HEK293 (cell line): ENCODE measurements at regions of chr9 and their contacts with region 1.

Region 1: GRCh38 chr9:86202338-86202882 is 57.0 kb downstream of the C9orf153 start:
- H3K4me3 ChIP-seq: no peak overlapping the region
- H3K27ac ChIP-seq: no peak overlapping the region
- H3K4me1 ChIP-seq: no peaks in the 10 kb centered on the region
- CTCF ChIP-seq: peak; percentile 31; the same call in 1 of the 2 replicates

Region 2: GRCh38 chr9:85914108-85914507 is 288.3 kb before region 1 on chr9:
- CTCF ChIA-PET with region 1: no interaction called
- POLR2A ChIA-PET with region 1: no interaction called
- H3K4me3 ChIP-seq: no peak overlapping the region
- H3K27ac ChIP-seq: no peak overlapping the region
- H3K4me1 ChIP-seq: no peaks in the 10 kb centered on the region
- CTCF ChIP-seq: no peak

Region 3: DNA sequence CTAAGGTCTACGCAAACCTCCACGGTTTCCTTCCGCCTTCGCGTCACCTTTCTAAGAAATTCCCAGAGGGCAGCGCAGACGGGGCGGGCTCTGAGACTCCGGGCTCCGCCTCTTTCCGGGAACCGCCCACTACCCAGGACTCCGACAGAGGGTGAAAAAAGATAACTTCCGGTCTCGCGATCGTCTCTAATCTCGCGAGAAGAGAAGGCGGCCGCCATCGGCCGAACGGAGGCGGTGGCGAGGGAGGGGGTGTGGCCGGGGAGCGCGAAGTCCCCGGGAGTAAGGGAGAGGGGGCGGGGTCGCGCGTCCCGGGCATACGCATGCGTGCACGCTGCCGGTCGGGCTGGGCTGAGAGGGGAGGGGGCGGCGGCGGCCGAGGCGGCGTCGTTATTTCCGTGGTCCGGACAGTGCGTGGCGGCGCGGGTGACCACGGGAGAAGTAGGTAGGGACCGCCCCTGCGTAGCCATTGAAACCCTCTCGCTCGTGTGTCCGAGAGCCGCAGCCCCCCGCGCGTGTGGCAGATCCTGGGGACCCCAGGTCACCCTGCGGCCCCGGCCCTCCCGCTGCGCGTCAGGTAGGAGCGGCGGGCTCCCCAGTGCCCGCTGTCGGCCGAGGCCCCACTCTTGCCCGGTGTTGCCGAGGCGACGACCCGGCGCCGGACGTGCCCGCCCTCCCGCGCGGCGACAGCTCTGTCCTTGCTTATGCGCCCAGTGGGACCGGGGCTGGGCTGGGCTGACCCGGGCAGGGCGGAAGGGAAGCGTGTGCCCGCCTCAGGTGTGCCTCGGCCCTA is 261.4 kb before region 1 on chr9 and contains the start of gene NAA35:
- CTCF ChIA-PET with region 1: no interaction called
- POLR2A ChIA-PET with region 1: no interaction called
- H3K4me3 ChIP-seq: peak within 1 kb of the TSS; percentile 100
- H3K27ac ChIP-seq: peak within 1 kb of the TSS; percentile 89
- H3K4me1 ChIP-seq: peaks cover 3% of the 10 kb centered on the region; the same call in 1 of the 2 replicates
- CTCF ChIP-seq: peak; percentile 47; the same call in 1 of the 2 replicates

Region 4: GRCh38 chr9:86044001-86044400 is 158.4 kb before region 1 on chr9:
- CTCF ChIA-PET with region 1: interaction called, 16 read pairs
- POLR2A ChIA-PET with region 1: no interaction called
- H3K4me3 ChIP-seq: no peak overlapping the region
- H3K27ac ChIP-seq: no peak overlapping the region
- H3K4me1 ChIP-seq: no peaks in the 10 kb centered on the region
- CTCF ChIP-seq: peak; percentile 60; the same call in 1 of the 2 replicates

Region 5: DNA sequence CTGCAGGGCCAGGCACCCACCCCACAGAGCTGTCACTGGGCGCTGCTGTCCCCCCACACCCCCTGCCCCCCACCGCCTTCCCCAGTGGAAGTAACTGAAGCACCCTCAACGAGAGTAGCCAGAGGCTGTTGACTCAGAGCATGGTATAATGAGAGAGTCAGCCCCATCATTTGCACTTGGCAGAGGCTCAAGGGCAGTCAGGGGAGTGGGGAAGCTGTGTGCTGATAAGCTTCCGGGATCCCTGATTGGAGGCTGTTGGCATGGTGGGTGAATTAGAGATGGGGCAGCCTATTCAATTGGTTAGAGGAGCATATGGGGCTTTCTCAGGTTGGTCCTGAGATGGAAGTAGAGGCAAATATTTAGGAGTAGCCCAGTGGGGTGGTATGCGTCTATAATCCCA is 25.9 kb before region 1 on chr9:
- CTCF ChIA-PET with region 1: interaction called, 16 read pairs
- POLR2A ChIA-PET with region 1: no interaction called
- H3K4me3 ChIP-seq: no peak overlapping the region
- H3K27ac ChIP-seq: peak overlapping the region; percentile 46; the same call in 1 of the 2 replicates
- H3K4me1 ChIP-seq: peaks cover 9% of the 10 kb centered on the region
- CTCF ChIP-seq: no peak

Region 6: DNA sequence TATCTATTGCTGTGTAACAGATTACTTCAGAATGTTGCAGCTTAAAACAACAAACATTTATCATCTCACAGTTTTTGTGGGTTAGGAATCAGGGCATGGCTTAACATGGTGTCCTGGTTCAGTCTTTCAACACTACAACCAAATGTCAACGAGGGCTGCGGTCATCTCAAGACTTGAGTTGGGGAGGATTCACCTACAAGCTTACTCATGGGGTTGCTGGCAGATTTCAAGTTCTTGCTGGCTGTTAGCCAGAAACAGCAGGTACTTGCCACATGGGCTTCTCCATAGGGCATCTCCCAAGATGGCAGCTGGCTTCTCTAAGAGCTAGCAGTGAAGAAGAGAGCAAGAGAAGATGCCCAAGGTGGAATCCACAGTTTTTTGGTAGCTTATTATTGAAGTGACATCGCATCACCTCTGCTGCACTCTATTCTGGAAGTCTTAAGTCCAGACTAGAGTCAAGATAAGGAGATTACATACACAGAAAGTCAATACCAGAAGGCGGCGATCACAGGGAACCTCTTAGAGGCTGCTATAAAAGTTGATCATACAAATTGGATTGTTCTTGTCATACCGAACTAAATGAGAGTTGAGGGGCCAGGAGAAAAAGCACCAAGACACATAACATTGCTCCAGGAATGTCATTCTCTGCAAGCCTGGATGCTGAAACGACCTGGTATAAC is 14.8 kb after region 1 on chr9:
- CTCF ChIA-PET with region 1: interaction called, 20 read pairs
- POLR2A ChIA-PET with region 1: interaction called, 3 read pairs
- H3K4me3 ChIP-seq: no peak overlapping the region
- H3K27ac ChIP-seq: no peak overlapping the region
- H3K4me1 ChIP-seq: no peaks in the 10 kb centered on the region
- CTCF ChIP-seq: no peak

Region 7: DNA sequence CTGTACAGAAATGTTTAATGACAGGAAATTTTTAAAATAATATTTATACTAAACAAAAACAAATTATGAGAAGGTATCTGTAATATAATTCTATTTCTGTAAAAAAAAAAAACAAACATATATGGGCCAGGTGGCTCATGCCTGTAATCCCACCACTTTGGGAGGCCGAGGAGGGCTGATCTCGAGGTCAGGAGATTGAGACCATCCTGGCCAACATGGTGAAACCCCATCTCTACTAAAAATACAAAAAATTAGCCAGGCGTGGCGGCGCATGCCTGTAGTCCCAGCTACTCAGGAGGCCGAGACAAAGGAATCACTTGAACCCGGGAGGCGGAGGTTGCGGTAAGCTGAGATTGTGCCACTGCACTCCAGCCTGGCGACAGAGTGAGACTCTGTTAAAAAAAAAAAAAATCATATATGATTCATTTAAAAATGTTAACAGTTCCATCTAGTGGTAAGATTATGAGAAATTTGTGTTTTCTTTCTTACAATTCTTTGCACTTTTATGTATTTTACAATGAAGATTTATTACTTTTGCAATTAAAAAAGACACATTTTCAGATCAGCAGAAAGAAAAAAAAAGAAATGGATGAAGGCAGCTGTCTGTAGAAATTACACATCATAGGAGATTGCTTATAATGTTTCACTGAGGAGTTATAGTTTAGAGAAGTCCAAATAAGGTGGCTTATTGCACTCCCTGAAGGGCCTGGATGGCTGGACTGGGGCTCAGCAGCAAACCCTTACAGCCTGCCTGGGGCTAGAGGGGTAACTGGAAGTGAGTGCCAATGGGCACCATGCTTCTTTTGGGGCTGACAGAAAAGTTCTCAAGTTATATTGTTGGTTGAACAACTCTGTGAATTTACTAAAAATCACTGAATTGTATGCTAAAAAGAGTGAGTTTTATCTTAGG is 36.7 kb after region 1 on chr9:
- CTCF ChIA-PET with region 1: interaction called, 23 read pairs
- POLR2A ChIA-PET with region 1: no interaction called
- H3K4me3 ChIP-seq: no peak overlapping the region
- H3K27ac ChIP-seq: no peak overlapping the region
- H3K4me1 ChIP-seq: no peaks in the 10 kb centered on the region
- CTCF ChIP-seq: no peak; the same call in 1 of the 2 replicates

Region 8: GRCh38 chr9:86275962-86276361 is 73.6 kb after region 1 on chr9:
- CTCF ChIA-PET with region 1: interaction called, 17 read pairs
- POLR2A ChIA-PET with region 1: no interaction called
- H3K4me3 ChIP-seq: no peak overlapping the region
- H3K27ac ChIP-seq: no peak overlapping the region
- H3K4me1 ChIP-seq: no peaks in the 10 kb centered on the region
- CTCF ChIP-seq: no peak